ENCODE measurements at regions of chrX and their contacts with region 1.

Region 1: GRCh38 chrX:119067023-119067739 is 5.6 kb upstream of the CT47C1 start:
- DNase-seq: peak; percentile 66
- ATAC-seq: peak; percentile 84
- H3K4me3 ChIP-seq: no peak overlapping the region
- H3K4me3 Mint-ChIP-seq: no peak overlapping the region
- H3K27ac ChIP-seq: no peak overlapping the region
- H3K27ac Mint-ChIP-seq: no peak overlapping the region
- H3K4me1 ChIP-seq: peaks cover 11 to 21% of the 10 kb centered on the region in 2 donors
- H3K4me1 Mint-ChIP-seq: peaks cover 14% of the 10 kb centered on the region
- H3K27me3 ChIP-seq: no peaks in the 10 kb centered on the region
- H3K27me3 Mint-ChIP-seq: no peaks in the 10 kb centered on the region
- CTCF ChIP-seq: peak; percentile 63

Region 2: DNA sequence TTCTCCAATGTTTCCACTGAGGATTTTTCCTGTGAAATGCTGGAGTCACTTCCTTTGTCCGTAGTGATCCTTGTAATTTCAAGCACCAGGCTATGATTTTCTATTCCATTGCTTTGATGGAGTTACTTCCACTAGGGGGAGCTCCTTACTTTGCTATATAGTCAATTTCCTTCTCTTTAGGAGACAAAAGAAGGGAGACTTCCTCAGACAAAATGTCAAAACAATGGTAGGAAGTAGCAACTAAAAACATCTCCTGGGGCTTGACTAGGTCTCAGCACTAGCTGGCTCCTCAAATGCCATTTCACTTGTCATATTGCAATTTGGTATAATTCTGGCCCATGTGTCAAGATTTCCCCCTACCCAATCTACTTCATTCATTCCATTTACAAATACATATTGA is 219.5 kb before region 1 on chrX:
- CTCF ChIA-PET with region 1: interaction called, 55 read pairs
- POLR2A ChIA-PET with region 1: no interaction called
- intact Hi-C with region 1: loop called (anchors 1 kb)
- DNase-seq: peak; percentile 65
- ATAC-seq: peak; percentile 39
- H3K4me3 ChIP-seq: no peak overlapping the region
- H3K4me3 Mint-ChIP-seq: no peak overlapping the region
- H3K27ac ChIP-seq: no peak overlapping the region
- H3K27ac Mint-ChIP-seq: no peak overlapping the region
- H3K4me1 ChIP-seq: no peaks in the 10 kb centered on the region
- H3K4me1 Mint-ChIP-seq: no peaks in the 10 kb centered on the region
- H3K27me3 ChIP-seq: no peaks in the 10 kb centered on the region
- H3K27me3 Mint-ChIP-seq: peaks cover 3% of the 10 kb centered on the region
- CTCF ChIP-seq: peak; percentile 71

Region 3: DNA sequence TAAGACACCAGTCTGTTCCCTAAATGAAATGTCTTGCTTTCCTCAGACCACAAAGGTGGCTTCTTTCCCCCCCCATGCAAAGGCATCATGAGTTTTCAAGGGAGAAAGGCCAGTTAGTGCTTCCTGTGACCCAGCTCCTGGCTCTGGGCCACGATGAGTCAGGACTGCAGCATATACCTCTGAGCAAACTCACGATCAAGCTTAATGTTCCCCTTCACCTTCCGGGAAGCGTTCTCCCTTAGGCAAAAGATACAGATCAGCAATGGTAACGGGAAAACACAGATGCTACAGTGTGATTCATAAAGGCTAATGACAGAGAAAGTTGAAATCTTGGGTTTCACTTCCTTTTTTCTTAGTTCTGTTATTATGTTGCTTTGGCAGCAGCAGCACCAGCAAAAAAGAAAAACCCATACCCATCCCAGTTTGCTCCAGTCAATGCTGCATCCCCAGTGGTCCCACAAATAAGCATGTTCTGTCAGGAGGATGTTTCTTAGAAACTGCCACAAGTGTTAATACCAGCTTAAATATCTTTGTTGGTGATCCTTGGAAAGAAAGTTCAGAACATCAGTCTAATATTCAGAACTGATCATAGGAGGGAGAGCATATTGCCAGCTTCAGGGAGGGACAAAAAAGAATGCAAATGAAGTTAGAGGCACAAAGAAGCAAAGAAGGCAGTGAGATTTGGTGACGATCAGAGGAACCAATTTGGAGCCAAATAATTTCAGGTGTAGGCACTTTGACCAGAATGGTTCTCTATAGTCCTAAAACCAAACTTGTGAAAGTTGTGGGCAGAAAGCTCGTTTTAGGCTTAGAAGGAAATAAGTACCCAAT is 51.6 kb before region 1 on chrX:
- CTCF ChIA-PET with region 1: interaction called, 104 read pairs
- POLR2A ChIA-PET with region 1: no interaction called
- intact Hi-C with region 1: loop called (anchors 2 kb)
- DNase-seq: peak; percentile 76
- ATAC-seq: peak; percentile 79
- H3K4me3 ChIP-seq: peak overlapping the region in 1 of 5 experiments; percentile 31
- H3K4me3 Mint-ChIP-seq: peak overlapping the region; percentile 32
- H3K27ac ChIP-seq: peak overlapping the region; percentile 66 to 72
- H3K27ac Mint-ChIP-seq: peak overlapping the region; percentile 95
- H3K4me1 ChIP-seq: peaks cover 16 to 21% of the 10 kb centered on the region in 2 donors
- H3K4me1 Mint-ChIP-seq: peaks cover 24% of the 10 kb centered on the region
- H3K27me3 ChIP-seq: no peaks in the 10 kb centered on the region
- H3K27me3 Mint-ChIP-seq: no peaks in the 10 kb centered on the region
- CTCF ChIP-seq: no peak